Esophagus muscularis mucosa (tissue), 4 donors: ENCODE measurements at regions of chr10 and their contacts with region 1.

Region 1: DNA sequence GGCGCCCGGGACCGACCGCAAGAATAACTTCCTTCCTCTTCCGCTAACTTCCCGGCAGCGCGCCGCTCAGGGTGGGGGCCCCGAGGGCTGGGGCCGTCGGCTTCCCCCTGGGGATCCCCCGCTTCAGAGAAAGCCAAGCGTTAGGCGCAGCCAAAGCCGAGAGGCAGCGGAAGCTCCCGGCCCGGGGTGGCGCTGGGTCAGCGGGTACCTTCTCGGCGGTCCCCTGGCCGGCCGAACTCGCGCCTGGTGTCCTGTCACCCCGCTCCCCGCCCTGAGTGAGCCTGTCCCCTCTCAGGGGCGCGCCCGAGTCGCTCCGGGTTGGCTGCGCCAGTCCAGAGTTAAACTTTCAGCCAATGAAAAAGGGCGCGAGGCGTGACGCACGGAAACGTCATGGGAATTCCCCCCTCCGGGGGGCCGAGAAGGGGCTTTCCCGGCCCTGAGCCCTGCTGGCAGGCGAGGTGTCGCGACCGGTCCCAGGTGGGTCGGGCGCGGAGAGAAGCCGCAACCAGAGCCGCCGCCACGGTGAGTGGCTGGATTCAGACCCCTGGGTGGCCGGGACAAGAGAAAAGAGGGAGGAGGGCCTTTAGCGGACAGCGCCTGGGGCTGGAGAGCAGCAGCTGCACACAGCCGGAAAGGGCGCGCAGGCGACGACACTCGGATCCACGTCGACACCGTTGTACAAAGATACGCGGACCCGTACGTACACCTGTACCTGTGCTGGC is 1.3 kb upstream of the NFKB2 start:
- DNase-seq: peak; percentile 98
- H3K4me3 ChIP-seq: peak overlapping the region; percentile 70 to 88 (median 72)
- H3K27ac ChIP-seq: peak overlapping the region; percentile 95 to 99 (median 98)
- H3K4me1 ChIP-seq: peaks cover 25 to 55% (median 52%) of the 10 kb centered on the region in 4 donors
- H3K27me3 ChIP-seq: no peaks in the 10 kb centered on the region
- CTCF ChIP-seq: peak in 2 of 3 experiments; percentile 29 to 94
- EP300 ChIP-seq: no peak
- POLR2A ChIP-seq: peak; percentile 77

Region 2: DNA sequence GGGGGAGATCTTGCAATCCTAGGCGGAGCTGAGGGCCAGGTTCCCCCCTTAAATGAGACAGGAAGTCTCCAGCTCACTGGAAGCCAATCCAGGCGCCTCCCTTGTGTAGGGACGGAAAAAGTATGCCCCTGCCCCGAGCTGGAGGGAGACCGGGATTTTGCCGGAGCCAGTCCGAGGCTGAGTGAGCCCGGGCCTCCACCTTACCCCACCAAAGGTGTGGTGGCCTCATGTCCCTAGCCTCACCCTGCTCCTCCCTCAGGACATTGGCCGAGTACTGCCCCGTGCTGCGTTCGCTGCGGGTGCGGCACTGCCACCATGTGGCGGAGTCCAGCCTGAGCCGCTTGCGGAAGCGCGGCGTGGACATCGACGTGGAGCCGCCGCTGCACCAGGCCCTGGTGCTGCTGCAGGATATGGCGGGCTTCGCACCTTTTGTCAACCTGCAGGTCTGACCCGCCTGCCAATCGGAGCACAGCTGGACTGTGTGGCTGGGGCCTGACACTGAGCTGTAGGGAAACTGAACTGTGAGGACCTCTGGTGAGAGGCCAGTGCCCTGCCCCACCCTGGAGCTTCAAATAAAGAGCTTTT is 28.4 kb after region 1 on chr10:
- intact Hi-C with region 1: loop called (anchors 1 kb)
- DNase-seq: peak; percentile 94
- H3K4me3 ChIP-seq: peak overlapping the region; percentile 71 to 86 (median 83)
- H3K27ac ChIP-seq: peak overlapping the region; percentile 84 to 91 (median 90)
- H3K4me1 ChIP-seq: peaks cover 32 to 46% (median 44%) of the 10 kb centered on the region in 4 donors
- H3K27me3 ChIP-seq: peaks cover 0 to 14% (median 0%) of the 10 kb centered on the region in 4 donors
- CTCF ChIP-seq: peak; percentile 84 to 91 (median 86)
- EP300 ChIP-seq: no peak
- POLR2A ChIP-seq: no peak

Region 3: DNA sequence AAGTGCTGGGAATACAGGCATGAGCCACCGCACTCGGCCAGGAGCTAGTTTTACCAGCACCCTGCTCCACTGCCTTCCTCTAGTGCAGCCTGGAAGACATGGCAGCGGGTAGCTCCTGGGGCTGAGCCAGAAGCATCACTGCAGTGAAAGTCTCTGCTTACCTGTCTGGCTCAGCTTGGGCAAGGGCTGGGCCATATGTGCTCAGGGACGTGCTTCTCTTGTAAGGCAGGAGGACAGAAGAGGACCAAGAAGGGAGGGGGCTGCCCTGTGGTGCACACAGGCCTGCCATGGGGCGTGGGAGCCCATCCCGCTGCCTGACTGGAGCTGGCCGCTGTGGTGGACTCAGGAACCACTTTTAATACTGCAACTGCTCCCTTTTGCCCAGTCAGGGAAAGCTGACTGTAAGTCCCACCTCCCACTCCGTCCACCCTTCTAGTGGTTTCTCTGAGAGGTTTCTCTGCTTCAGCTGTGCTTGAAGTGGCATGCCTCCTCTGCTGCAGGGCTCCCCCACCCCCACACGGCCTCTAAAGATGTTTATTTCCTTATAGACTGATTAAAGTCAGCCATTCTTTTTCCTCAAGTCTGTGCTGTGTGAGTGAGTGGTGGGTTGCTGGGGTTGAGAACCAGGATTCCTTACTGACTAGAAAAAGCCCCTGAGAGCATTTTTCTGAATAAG is 82.4 kb after region 1 on chr10:
- intact Hi-C with region 1: loop called (anchors 5 kb)
- DNase-seq: no peak
- H3K4me3 ChIP-seq: no peak overlapping the region
- H3K27ac ChIP-seq: peak overlapping the region in 1 of 4 donors; percentile 27
- H3K4me1 ChIP-seq: peaks cover 0 to 9% (median 6%) of the 10 kb centered on the region in 4 donors
- H3K27me3 ChIP-seq: no peaks in the 10 kb centered on the region
- CTCF ChIP-seq: no peak
- EP300 ChIP-seq: no peak
- POLR2A ChIP-seq: no peak

Region 4: DNA sequence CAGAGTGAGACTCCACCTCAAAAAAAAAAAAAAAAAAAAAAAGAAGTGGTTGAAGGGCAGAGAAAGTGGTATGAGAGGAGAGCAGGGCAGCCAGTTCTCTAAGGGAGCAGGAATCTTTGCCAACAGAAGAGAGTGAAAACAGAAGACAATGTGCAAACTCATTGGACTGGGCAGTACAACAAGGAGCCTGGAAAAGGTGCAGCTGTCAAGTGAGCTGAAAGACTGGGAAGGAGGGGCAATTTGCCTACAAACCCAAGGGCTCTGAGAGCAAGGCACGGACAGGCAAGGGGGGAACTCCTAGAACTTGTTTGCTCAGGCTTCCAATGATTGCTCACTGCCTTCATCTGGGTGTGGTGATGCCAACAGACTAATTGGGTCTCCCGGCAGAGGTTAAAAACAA is 98.7 kb after region 1 on chr10:
- intact Hi-C with region 1: loop called (anchors 5 kb)
- DNase-seq: no peak
- H3K4me3 ChIP-seq: peak overlapping the region in 1 of 4 donors; percentile 13
- H3K27ac ChIP-seq: peak overlapping the region; percentile 69 to 78 (median 75)
- H3K4me1 ChIP-seq: peaks cover 31 to 77% (median 74%) of the 10 kb centered on the region in 4 donors
- H3K27me3 ChIP-seq: no peaks in the 10 kb centered on the region
- CTCF ChIP-seq: no peak
- EP300 ChIP-seq: no peak
- POLR2A ChIP-seq: no peak

Region 5: DNA sequence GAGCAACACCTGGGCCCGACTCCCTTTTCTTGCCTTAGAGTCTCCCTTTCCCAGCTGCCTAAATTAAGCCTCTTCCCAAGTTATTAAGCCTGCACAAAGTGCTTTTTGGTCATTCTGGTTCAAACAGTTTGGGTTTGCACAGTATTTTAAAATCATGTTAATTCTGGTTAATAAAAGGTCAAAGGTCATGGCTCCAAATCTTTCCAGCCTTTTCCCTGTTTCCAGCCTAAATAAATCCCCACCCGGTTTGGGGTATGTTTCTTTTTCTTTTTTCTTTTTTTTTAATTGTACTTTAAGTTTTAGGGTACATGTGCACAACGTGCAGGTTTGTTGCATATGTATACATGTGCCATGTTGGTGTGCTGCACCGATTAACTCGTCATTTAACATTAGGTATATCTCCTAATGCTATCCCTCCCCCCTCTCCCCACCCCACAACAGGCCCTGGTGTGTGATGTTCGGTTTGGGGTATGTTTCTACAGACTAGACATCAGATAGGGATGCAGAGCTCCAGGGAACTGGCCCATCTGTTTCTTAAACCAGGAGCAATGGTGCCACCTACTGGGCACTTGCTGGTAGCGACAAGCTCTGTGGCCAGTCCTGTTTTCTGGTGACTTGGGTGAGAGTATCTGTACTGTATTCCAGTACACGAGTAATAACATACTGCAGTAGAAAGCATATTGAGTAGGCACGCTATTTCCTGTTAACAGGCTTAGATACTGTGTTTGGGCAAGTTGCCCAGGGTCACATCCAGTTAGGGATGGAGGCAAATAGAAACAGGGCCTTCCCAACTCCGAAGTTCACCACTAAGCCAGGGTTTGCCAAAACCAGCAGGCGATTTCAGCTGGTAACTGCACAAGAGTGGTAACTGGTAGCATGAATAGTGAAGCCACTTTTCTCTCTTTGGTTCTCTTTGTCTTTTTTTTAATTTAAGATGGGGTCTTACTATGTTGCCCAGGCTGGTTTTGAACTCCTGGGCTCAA is 189.5 kb after region 1 on chr10:
- intact Hi-C with region 1: loop called (anchors 5 kb)
- DNase-seq: peak; percentile 96
- H3K4me3 ChIP-seq: no peak overlapping the region
- H3K27ac ChIP-seq: no peak overlapping the region
- H3K4me1 ChIP-seq: peaks cover 5 to 47% (median 36%) of the 10 kb centered on the region in 4 donors
- H3K27me3 ChIP-seq: no peaks in the 10 kb centered on the region
- CTCF ChIP-seq: peak; percentile 84 to 89 (median 87)
- EP300 ChIP-seq: no peak
- POLR2A ChIP-seq: no peak